ENCODE measurements at regions of chr6 and their contacts with region 1.

Region 1: DNA sequence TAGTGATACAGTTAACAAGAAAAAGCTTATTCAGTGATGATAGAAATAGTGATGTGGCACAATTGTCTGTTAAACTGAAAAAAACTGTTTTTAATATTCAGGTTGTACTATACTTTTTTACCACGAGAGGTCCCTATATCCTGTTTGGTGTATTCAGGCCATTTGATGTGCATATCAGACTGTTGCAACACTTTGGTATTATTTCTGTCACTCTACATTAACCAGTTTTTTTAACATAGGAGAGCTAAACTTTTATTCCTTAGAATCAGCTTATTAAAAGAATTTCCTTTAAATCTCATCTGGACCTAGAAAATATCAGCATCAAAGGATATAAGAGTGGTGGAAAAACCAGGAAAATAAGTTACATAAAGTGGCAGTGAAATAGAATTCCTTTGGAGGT is 36.8 kb downstream of the TSPYL4 start:
- DNase-seq: no peak
- H3K4me3 Mint-ChIP-seq: no peak overlapping the region
- H3K27ac Mint-ChIP-seq: no peak overlapping the region
- H3K4me1 Mint-ChIP-seq: no peaks in the 10 kb centered on the region
- H3K27me3 Mint-ChIP-seq: no peaks in the 10 kb centered on the region
- CTCF ChIP-seq: peak; percentile 34

Region 2: DNA sequence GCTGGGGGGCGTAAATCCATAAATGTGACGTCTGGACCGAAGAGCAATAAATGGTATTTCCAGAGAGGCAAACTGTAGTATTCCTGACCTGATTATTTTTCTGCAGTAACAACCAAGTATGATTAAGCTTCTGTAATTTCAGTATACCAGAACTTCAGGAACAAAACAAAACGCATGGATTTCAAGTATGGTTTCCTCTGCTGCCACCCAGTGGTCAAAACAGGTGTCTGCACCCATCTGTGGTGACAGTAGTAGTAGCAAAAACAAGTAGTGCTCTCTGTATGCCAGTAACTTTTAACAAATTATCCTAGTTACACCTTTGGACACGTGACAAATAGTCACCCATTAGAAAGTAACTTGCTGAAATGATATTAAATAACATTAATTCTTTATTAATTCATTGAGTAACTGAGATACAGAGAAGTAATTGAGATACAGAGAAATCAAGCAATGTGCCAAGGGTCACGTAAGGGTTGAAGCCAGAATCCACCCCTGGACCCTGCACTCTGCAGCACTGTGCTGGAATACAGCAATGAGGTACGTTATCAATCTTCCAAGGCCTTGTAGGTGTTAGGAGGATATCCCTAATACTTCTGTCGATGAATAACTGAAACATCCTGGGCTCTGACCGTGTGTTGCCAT is 344.4 kb after region 1 on chr6:
- CTCF ChIA-PET with region 1: interaction called, 3 read pairs
- intact Hi-C with region 1: loop called (anchors 5 kb)
- DNase-seq: peak; percentile 70
- H3K4me3 Mint-ChIP-seq: no peak overlapping the region
- H3K27ac Mint-ChIP-seq: no peak overlapping the region
- H3K4me1 Mint-ChIP-seq: peaks cover 23% of the 10 kb centered on the region
- H3K27me3 Mint-ChIP-seq: peaks cover 44% of the 10 kb centered on the region
- CTCF ChIP-seq: peak; percentile 78

Region 3: GRCh38 chr6:116648156-116648555 is 431.1 kb after region 1 on chr6:
- CTCF ChIA-PET with region 1: no interaction called
- intact Hi-C with region 1: loop called (anchors 5 kb)
- DNase-seq: no peak
- H3K4me3 Mint-ChIP-seq: no peak overlapping the region
- H3K27ac Mint-ChIP-seq: no peak overlapping the region
- H3K4me1 Mint-ChIP-seq: no peaks in the 10 kb centered on the region
- H3K27me3 Mint-ChIP-seq: no peaks in the 10 kb centered on the region
- CTCF ChIP-seq: no peak

Measured in Calu3 (cell line).